Activated T-helper 1 cell treated with anti-CD3 and anti-CD28 coated beads, Interleukin-12 subunit alpha, Interleukin-12 subunit beta, Interleukin-2, Interleukin-4 antibody, amounts not matched to agents 30 ng/mL and 10 ng/mL and 1 ng/mL, durations not matched to agents 14 hours and 24 hours and 36 hours (primary cell): ENCODE measurements at regions of chr16 and their contacts with region 1.

Region 1: GRCh38 chr16:85610508-85611332 is 2.4 kb upstream of the GSE1 start:
- DNase-seq: peak; percentile 75
- H3K4me3 Mint-ChIP-seq: peak overlapping the region; percentile 80
- H3K27ac Mint-ChIP-seq: peak overlapping the region; percentile 63
- H3K4me1 Mint-ChIP-seq: peaks cover 26% of the 10 kb centered on the region
- H3K27me3 Mint-ChIP-seq: peaks cover 13% of the 10 kb centered on the region

Region 2: DNA sequence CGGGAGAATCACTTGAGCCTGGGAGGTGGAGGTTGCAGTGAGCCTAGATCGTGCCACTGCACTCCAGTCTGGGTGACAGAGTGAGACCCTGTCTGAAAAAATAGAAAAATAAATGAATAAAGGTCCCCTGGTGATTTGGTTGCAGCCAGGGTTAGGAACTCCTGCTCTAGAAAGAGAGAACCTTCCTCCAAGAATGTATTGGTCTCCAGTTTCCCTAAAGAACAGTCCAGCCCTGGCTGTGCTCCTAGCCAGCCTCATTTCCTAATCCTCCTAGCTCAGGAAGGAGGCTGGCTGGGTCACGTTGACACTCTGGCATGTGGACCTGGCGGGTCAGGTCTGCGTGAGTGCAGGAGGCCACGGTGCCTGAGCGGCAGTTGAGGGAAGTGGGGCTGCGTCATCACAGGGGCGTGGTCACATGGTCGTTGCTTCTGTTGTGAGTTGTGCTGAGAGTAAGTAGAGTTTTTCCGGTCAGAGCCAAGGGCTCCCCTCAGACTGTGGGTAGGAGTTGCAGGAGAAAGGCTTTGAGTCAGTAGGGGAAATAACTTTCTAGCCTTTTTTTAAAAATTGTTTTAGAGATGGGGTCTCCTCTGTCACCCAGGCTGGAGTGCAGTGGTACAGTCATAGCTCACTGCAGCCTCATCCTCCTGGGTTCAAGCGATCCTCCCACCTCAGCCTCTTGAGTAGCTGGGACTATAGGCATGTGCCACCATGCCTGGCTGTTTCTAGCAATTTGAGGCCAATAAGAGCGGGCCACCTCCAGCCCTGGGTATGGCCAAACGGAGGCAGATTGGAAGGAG is 304.5 kb before region 1 on chr16:
- intact Hi-C with region 1: loop called (anchors 2 kb)
- DNase-seq: peak; percentile 80
- H3K4me3 Mint-ChIP-seq: peak overlapping the region; percentile 55
- H3K27ac Mint-ChIP-seq: peak overlapping the region; percentile 89
- H3K4me1 Mint-ChIP-seq: peaks cover 42% of the 10 kb centered on the region
- H3K27me3 Mint-ChIP-seq: no peaks in the 10 kb centered on the region

Region 3: GRCh38 chr16:85420501-85421337 is 190.0 kb before region 1 on chr16:
- intact Hi-C with region 1: loop called (anchors 1 kb)
- DNase-seq: peak; percentile 64
- H3K4me3 Mint-ChIP-seq: no peak overlapping the region
- H3K27ac Mint-ChIP-seq: no peak overlapping the region
- H3K4me1 Mint-ChIP-seq: no peaks in the 10 kb centered on the region
- H3K27me3 Mint-ChIP-seq: peaks cover 3% of the 10 kb centered on the region

Region 4: DNA sequence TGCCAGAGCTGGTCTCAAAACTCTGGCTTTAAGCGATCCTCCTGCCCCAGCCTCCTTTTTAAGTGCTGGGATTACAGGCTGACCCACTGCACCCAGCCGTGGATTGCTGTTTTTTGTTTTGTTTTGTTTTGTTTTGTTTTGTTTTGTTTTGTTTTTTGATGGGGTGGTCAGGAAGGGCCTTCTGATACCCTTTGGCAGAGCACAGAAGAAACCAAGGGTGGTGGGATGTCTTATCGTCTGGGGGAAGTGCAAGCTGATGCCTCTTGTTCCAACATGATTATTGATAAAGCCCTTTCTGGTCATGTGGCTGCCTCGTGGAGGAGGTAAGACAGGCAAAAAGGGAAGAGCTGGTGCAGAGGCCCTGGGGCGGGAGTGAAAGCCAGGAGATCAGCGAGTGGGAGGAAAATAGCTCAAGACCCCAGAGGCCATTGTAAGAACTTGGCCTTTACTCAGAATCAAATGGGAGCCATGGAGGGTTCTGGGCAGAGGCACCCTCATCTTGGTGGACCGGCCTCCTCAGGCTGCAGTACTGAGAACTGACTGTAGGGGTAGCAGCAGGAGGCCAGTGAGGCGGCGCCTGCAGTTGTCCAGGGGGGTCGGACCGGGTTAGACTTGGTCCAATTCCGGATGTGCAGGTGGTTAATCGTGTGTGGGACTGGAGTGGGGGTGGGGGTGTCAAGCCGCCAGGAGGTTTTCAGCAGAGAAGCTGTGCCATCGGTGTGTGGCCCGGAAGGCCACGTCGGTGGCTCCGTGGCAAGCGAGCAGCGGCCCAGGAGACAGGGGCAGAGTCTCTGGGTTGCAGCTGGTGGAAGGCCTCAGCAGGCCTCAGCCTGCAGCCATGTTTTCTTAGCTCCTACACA is 82.0 kb before region 1 on chr16:
- intact Hi-C with region 1: loop called (anchors 1 kb)
- DNase-seq: no peak
- H3K4me3 Mint-ChIP-seq: no peak overlapping the region
- H3K27ac Mint-ChIP-seq: no peak overlapping the region
- H3K4me1 Mint-ChIP-seq: no peaks in the 10 kb centered on the region
- H3K27me3 Mint-ChIP-seq: peaks cover 4% of the 10 kb centered on the region

Region 5: DNA sequence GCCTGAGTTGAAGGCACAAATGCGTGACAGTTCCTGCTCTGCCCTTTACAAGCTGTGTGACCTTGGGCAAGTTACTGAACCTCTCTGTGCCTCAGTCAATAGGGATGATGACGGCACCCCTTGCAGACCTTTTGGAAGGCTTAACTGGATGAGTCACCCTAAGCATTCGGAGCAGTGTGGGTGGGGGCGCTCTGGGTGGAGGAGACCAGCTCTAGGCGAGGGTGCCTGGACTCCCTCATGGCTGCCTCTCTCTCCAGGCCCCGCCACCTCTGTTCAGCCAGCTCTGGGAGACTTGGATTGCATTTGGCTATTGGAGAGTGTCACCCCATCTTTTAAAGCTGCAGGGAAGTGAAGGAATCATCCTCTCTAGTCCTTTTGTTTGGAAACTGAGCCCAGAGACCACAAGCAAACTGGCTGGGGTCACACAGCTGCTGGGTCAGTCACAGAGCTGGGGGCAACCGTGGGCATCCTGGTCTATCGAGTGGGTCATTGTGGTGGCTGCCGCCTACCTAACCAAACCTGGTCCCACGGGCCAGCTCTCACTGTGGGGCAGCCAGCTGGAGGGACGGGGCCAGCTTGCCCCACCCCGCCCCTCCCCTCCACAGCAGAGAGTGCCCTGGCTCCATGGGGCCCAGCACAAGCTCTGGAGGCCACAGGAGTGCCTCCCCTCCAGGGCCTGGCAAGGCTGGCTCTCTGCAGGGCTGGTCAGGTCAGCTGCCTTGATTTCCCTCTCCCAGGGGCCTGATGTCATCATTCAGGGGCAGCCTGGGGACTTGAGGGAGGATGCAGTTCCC is 17.8 kb before region 1 on chr16:
- intact Hi-C with region 1: no loop called
- DNase-seq: no peak
- H3K4me3 Mint-ChIP-seq: no peak overlapping the region
- H3K27ac Mint-ChIP-seq: no peak overlapping the region
- H3K4me1 Mint-ChIP-seq: peaks cover 10% of the 10 kb centered on the region
- H3K27me3 Mint-ChIP-seq: no peaks in the 10 kb centered on the region